Transverse colon (tissue), 4 donors: ENCODE measurements at regions of chr11 and their contacts with region 1.

Region 1: DNA sequence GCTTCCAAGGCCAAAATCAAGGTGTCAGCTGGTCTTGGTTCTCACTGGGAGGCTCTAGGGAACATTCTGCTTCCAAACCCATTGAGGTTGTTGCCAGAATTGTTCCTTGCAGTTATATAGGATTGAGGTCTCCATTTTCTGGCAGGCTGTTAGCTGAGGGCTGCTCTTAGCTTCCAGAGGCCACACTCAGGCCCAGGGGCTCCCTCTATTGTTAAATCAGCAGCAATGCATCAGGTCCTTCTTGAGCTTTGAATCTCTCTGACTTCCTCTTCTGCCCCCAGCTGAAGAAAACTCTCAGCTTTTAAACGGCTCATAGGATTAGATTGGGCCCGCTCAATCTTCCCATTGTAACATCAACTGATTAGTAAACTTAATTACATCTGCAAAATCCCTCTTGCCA is 39.3 kb upstream of the BSX start:
- DNase-seq: peak; percentile 10
- H3K4me3 ChIP-seq: no peak overlapping the region
- H3K27ac ChIP-seq: no peak overlapping the region
- H3K4me1 ChIP-seq: peaks cover 0 to 10% (median 3%) of the 10 kb centered on the region in 4 donors
- H3K27me3 ChIP-seq: peaks cover 17% of the 10 kb centered on the region
- CTCF ChIP-seq: peak in 3 of 5 experiments; percentile 32 to 35 (median 33)
- EP300 ChIP-seq: no peak
- POLR2A ChIP-seq: no peak

Region 2: GRCh38 chr11:122578168-122578825 is 442.7 kb before region 1 on chr11:
- in situ Hi-C with region 1: loop called in 1 of 4 experiments (anchors 25 kb)
- intact Hi-C with region 1: no loop called
- DNase-seq: no peak
- H3K4me3 ChIP-seq: no peak overlapping the region
- H3K27ac ChIP-seq: no peak overlapping the region
- H3K4me1 ChIP-seq: peaks cover 0 to 8% (median 0%) of the 10 kb centered on the region in 4 donors
- H3K27me3 ChIP-seq: no peaks in the 10 kb centered on the region
- CTCF ChIP-seq: no peak
- EP300 ChIP-seq: no peak
- POLR2A ChIP-seq: no peak

Region 3: GRCh38 chr11:122853971-122854446 is 167.0 kb before region 1 on chr11:
- in situ Hi-C with region 1: loop called in 1 of 4 experiments (anchors 25 kb)
- intact Hi-C with region 1: no loop called
- DNase-seq: peak; percentile 31
- H3K4me3 ChIP-seq: no peak overlapping the region
- H3K27ac ChIP-seq: no peak overlapping the region
- H3K4me1 ChIP-seq: no peaks in the 10 kb centered on the region
- H3K27me3 ChIP-seq: no peaks in the 10 kb centered on the region
- CTCF ChIP-seq: peak; percentile 65 to 72 (median 69)
- EP300 ChIP-seq: no peak
- POLR2A ChIP-seq: no peak

Region 4: DNA sequence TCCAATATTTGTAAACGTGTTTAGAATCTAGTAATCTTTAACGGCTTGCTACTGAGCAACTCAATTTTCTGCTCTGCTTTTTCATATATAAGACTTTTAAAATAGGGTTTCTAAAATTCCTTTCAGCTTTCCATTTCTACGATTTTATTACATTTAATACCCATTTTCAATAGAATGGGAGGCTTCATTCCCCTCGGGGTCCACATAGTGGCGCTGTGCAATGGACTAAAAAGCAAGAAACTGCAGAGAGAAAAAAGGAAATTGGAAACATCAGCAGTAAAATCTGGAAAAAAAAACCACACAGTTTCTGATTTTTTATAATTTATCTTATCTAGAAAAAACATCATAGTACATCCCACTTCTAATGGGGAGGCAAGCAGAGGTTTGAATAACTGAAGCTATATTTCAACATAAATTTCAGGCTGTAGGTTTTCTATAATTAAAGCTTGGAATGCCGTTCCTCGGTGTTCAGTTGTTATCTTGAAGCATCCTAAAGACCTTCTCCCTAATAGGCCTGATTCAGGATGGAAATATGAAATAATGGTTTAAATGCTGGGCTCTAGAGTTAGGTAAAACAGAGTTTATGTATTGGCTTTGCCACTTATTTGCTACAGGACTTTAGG is 157.2 kb before region 1 on chr11:
- in situ Hi-C with region 1: loop called in 2 of 4 experiments (anchors 10 to 25 kb)
- intact Hi-C with region 1: loop called (anchors 5 kb)
- DNase-seq: peak; percentile 47
- H3K4me3 ChIP-seq: no peak overlapping the region
- H3K27ac ChIP-seq: no peak overlapping the region
- H3K4me1 ChIP-seq: no peaks in the 10 kb centered on the region
- H3K27me3 ChIP-seq: peaks cover 19% of the 10 kb centered on the region
- CTCF ChIP-seq: peak; percentile 64 to 75 (median 73)
- EP300 ChIP-seq: no peak
- POLR2A ChIP-seq: no peak

Region 5: DNA sequence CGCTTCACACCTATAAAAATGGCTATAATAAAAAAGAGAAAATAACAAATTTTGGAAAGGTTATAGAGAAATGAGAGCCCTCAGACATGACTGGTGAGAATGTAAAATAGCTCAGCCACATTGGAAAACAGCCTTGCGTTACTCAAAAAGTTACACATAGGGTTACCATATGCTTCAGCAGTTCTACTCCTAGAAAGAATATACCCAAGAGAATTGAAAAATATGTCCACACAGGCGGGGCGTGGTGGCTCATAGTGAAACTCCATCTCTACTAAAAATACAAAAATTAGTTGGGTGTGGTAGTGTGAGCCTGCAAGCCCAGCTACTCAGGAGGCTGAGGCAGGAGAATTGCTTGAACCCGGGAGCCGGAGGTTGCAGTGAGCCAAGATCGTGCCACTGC is 146.0 kb before region 1 on chr11:
- in situ Hi-C with region 1: loop called in 2 of 4 experiments (anchors 5 to 25 kb)
- intact Hi-C with region 1: no loop called
- DNase-seq: no peak
- H3K4me3 ChIP-seq: no peak overlapping the region
- H3K27ac ChIP-seq: no peak overlapping the region
- H3K4me1 ChIP-seq: no peaks in the 10 kb centered on the region
- H3K27me3 ChIP-seq: peaks cover 2% of the 10 kb centered on the region
- CTCF ChIP-seq: no peak
- EP300 ChIP-seq: no peak
- POLR2A ChIP-seq: no peak

Region 6: GRCh38 chr11:123054301-123055065 is 33.5 kb after region 1 on chr11:
- in situ Hi-C with region 1: no loop called
- intact Hi-C with region 1: no loop called
- DNase-seq: no peak
- H3K4me3 ChIP-seq: no peak overlapping the region
- H3K27ac ChIP-seq: peak overlapping the region; percentile 19 to 42 (median 26)
- H3K4me1 ChIP-seq: peaks cover 8 to 38% (median 12%) of the 10 kb centered on the region in 4 donors
- H3K27me3 ChIP-seq: no peaks in the 10 kb centered on the region
- CTCF ChIP-seq: peak; percentile 63 to 77 (median 71)
- EP300 ChIP-seq: no peak
- POLR2A ChIP-seq: no peak